ENCODE measurements at regions of chr12 and their contacts with region 1.

Region 1: GRCh38 chr12:109553483-109553882 is 19.8 kb downstream of the MMAB start:
- H3K4me3 ChIP-seq: no peak overlapping the region
- H3K27ac ChIP-seq: no peak overlapping the region
- H3K4me1 ChIP-seq: no peaks in the 10 kb centered on the region
- CTCF ChIP-seq: no peak

Region 2: DNA sequence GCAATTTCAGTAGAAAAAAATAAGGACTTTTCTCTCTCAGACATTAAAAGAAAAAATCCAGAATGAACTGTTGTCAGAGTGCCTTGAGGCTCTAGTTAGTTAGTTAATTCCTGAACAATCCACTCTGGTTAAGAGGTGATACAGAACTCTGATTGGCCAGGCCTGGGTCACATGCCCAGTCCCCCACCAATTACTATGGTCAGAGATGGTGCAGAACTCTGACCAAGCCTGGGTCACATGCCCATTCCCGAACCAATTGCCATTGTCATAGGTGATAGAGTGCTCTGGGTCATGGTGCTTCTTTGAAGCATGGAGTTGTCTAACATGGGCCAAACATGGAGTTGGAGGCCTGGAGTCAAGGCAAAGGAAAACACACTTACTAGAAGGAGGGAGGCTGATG is 216.9 kb before region 1 on chr12:
- CTCF ChIA-PET with region 1: no interaction called
- POLR2A ChIA-PET with region 1: no interaction called
- H3K4me3 ChIP-seq: no peak overlapping the region
- H3K27ac ChIP-seq: no peak overlapping the region
- H3K4me1 ChIP-seq: no peaks in the 10 kb centered on the region
- CTCF ChIP-seq: no peak

Region 3: GRCh38 chr12:109573029-109573913 is 19.8 kb after region 1 on chr12 and contains the starts of genes MMAB and MVK:
- CTCF ChIA-PET with region 1: interaction called, 3 read pairs
- POLR2A ChIA-PET with region 1: interaction called, 15 read pairs
- H3K4me3 ChIP-seq: peak within 1 kb of the TSS; percentile 78
- H3K27ac ChIP-seq: peak within 1 kb of the TSS; percentile 80
- H3K4me1 ChIP-seq: no peaks in the 10 kb centered on the region
- CTCF ChIP-seq: no peak

Region 4: DNA sequence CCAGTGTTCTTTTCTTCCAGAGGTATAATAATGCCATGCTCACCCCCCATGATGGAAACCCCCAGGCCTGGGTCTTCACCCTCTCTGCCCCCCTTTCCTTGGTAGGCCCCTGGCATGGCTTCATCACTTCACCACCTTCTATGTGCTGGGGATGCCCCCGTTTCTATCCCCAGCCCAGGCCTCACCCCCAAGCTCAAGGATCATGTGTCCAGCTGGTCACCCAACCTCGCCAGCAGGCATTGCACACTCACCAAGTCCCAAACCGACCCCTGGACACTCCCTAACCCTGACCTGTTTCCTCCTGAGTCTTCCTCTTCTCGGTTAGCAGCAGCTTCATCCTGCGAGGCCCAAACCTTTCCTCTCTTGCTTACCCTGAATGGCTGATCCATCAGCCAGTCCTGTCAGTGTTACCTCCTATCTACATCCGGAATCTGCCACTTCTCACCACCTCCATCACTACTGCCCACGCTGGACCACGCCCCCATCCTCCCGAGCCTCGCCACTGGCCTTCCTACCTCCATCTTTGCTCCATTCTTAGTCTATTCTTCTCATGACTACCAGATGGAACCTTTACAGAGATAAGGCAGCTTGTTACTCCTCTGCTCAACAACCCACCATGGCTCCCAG is 89.1 kb after region 1 on chr12:
- CTCF ChIA-PET with region 1: no interaction called
- POLR2A ChIA-PET with region 1: no interaction called
- H3K4me3 ChIP-seq: no peak overlapping the region
- H3K27ac ChIP-seq: no peak overlapping the region
- H3K4me1 ChIP-seq: no peaks in the 10 kb centered on the region
- CTCF ChIP-seq: no peak